PC-3 (cell line): ENCODE measurements at regions of chr5 and their contacts with region 1.

Region 1: GRCh38 chr5:62448528-62448927 is 36.0 kb downstream of the IPO11 start:
- DNase-seq: no peak
- ATAC-seq: no peak
- H3K4me3 ChIP-seq: no peak overlapping the region
- H3K27ac ChIP-seq: no peak overlapping the region
- H3K4me1 ChIP-seq: no peaks in the 10 kb centered on the region
- H3K27me3 ChIP-seq: no peaks in the 10 kb centered on the region
- CTCF ChIP-seq: no peak

Region 2: GRCh38 chr5:62403434-62404250 is 44.9 kb before region 1 on chr5 and contains the start of gene DIMT1:
- CTCF ChIA-PET with region 1: no interaction called
- POLR2A ChIA-PET with region 1: interaction called, 11 read pairs
- intact Hi-C with region 1: no loop called
- DNase-seq: peak; percentile 96
- ATAC-seq: peak; percentile 99
- H3K4me3 ChIP-seq: peak within 1 kb of the TSS; percentile 73
- H3K27ac ChIP-seq: peak within 1 kb of the TSS; percentile 84
- H3K4me1 ChIP-seq: peaks cover 17% of the 10 kb centered on the region; the same call in 1 of the 2 replicates
- H3K27me3 ChIP-seq: no peaks in the 10 kb centered on the region
- CTCF ChIP-seq: no peak
- total RNA-seq, gene DIMT1: 47.1 and 59.8 TPM in 2 replicates

Region 3: GRCh38 chr5:62506659-62507460 is 58.3 kb after region 1 on chr5:
- CTCF ChIA-PET with region 1: no interaction called
- POLR2A ChIA-PET with region 1: no interaction called
- intact Hi-C with region 1: no loop called
- DNase-seq: no peak
- ATAC-seq: no peak
- H3K4me3 ChIP-seq: no peak overlapping the region
- H3K27ac ChIP-seq: no peak overlapping the region
- H3K4me1 ChIP-seq: no peaks in the 10 kb centered on the region
- H3K27me3 ChIP-seq: no peaks in the 10 kb centered on the region
- CTCF ChIP-seq: no peak

Region 4: DNA sequence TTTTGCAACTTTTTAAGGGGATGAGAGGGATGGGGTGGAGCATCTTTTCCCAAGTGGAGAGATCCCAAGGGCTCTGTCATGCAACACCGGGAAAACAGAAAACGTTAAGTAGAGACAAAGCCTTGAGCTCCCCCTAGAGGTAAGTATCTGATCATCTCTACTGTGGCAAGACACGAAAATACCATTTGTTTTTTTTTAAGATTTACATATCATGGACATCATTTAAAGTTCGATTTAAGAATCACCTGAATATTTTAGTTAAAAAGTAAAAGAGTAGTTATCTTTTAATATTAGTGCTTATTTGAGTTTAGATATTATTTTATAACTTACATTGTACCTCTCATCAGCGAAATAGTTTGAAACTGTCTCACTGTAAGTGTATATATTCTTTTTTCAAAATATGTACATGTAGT is 330.5 kb after region 1 on chr5:
- CTCF ChIA-PET with region 1: no interaction called
- POLR2A ChIA-PET with region 1: no interaction called
- intact Hi-C with region 1: loop called (anchors 5 kb)
- DNase-seq: peak; percentile 64
- ATAC-seq: peak; percentile 77
- H3K4me3 ChIP-seq: no peak overlapping the region
- H3K27ac ChIP-seq: no peak overlapping the region
- H3K4me1 ChIP-seq: no peaks in the 10 kb centered on the region
- H3K27me3 ChIP-seq: 0 out of 2 replicates have a peak, but pooled peaks cover 1% of the 10 kb centered on the region
- CTCF ChIP-seq: peak; percentile 72